Activated CD4-positive, alpha-beta T cell treated with anti-CD3 and anti-CD28 coated beads, Interleukin-2, amount 10 ng/mL, durations not matched to agents 24 days and 14 days (primary cell): ENCODE measurements at regions of chr21 and their contacts with region 1.

Region 1: GRCh38 chr21:32392880-32393676 is at the start of gene URB1:
- DNase-seq: peak; percentile 99
- H3K4me3 Mint-ChIP-seq: peak within 1 kb of the TSS; percentile 93
- H3K27ac Mint-ChIP-seq: peak within 1 kb of the TSS; percentile 89
- H3K4me1 Mint-ChIP-seq: peaks cover 30% of the 10 kb centered on the region
- H3K27me3 Mint-ChIP-seq: peaks cover 8% of the 10 kb centered on the region
- total RNA-seq, gene URB1: 39.2 and 41.7 TPM in 2 replicates

Region 2: GRCh38 chr21:32278518-32279376 is 114.3 kb before region 1 on chr21 and contains the start of gene MIS18A:
- intact Hi-C with region 1: loop called (anchors 2 kb)
- DNase-seq: peak; percentile 99
- H3K4me3 Mint-ChIP-seq: peak within 1 kb of the TSS; percentile 100
- H3K27ac Mint-ChIP-seq: peak within 1 kb of the TSS; percentile 98
- H3K4me1 Mint-ChIP-seq: peaks cover 32% of the 10 kb centered on the region
- H3K27me3 Mint-ChIP-seq: peaks cover 3% of the 10 kb centered on the region
- total RNA-seq, gene MIS18A: 27.8 and 31.3 TPM in 2 replicates

Region 3: DNA sequence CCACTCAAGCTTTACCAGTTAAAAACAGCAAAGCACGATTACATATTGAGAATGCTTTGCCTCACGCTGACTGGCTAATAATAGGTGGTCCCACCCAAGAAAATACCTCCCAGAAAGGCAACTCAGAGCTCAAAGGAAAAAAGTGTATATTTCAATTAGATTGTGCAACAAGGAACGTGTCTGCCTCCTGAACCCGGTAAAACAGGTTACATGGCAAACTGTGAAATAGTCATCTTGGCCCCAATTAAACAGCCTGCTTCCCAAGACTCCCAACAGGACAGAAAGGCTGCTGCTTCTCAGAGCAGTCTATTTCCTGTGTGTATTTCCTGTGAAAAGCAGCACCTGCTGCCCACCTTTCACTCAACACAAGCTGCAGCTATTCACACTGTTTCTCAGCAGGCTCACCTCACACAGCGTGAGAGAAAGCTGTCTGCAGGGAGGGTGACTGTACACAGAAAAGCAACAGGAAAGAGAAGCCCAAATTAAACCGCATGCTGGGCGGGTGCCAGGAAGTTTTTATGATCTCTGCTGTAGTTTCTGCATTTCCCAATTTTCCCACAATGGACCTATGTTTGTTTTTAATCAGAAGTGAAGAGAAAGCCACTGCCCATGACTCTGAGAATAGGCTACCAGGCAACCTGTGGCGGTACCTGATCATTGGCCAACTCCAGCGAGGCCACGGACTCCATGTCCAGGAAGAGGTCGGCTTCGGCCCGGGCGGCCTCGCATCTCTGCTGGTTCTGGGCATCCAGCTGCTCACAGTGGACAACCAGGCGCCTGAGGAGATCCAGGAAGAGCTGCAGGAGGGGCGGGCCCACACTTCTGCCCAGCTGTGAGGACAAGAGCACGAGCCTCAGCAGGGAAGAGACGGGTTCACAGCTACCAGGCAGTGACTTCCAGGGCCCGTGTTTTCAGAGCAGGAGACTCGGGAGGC is 44.2 kb before region 1 on chr21:
- intact Hi-C with region 1: no loop called
- DNase-seq: no peak
- H3K4me3 Mint-ChIP-seq: no peak overlapping the region
- H3K27ac Mint-ChIP-seq: no peak overlapping the region
- H3K4me1 Mint-ChIP-seq: no peaks in the 10 kb centered on the region
- H3K27me3 Mint-ChIP-seq: no peaks in the 10 kb centered on the region

Region 4: DNA sequence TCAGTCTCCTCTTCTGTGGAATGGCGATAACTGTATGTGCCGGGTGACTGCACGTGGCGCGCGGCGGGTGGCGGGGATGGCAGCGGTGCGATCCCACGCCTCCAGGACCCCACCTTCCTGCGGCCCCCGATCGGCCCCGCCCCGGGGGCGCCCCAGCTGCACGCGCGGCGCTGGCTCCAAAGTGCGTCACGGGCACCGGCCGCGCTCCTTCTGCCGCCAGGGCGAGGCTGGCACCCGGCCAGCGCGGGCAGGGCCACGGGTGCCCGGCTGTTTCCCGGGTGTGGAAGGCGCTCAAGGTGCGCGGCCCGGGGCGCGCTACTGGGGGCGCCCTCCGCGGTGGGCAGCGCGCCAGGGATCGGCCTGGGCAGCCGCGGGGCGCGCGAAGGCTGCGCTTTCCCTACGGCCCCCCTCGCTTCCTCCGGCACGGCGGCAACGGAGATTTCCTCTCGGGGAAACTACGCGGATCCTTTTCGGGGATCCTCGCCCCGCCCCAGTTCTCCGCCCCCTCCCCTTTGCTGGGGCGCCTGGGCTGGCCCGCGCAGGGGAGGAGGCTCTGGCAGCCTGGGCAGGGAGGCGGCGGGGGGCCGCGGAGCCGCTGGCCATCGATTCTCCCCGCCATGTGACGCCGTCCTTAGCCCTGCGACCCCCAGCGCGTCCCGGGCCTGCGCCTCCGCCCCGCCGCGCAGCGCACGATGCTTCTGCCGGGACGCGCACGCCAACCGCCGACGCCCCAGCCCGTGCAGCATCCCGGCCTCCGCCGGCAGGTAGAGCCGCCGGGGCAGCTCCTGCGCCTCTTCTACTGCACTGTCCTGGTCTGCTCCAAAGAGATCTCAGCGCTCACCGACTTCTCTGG is 19.3 kb after region 1 on chr21 and contains the start of gene EVA1C:
- intact Hi-C with region 1: loop called (anchors 1 kb)
- DNase-seq: peak; percentile 87
- H3K4me3 Mint-ChIP-seq: peak within 1 kb of the TSS; percentile 95
- H3K27ac Mint-ChIP-seq: peak within 1 kb of the TSS; percentile 94
- H3K4me1 Mint-ChIP-seq: peaks cover 16% of the 10 kb centered on the region
- H3K27me3 Mint-ChIP-seq: peaks cover 2% of the 10 kb centered on the region
- total RNA-seq, gene EVA1C: 6.0 and 8.2 TPM in 2 replicates

Region 5: DNA sequence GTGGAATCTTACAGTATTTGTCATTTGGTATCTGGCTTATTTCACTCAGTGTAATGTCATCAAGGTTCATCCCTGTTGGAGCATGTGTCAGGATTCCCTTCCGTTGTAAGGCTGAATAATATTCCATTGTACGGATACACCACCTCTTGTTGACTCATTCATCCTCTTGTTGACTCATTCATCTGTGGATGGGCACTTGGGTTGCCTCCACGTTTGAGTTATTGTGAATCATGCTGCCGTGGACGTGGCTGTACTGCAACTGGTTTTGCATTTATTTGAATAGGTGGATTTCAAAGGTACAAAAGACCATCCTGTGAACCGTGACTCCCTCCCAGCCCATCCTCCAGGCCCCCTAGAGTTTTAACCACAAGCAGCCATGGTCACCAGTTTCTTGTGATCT is 204.1 kb after region 1 on chr21:
- intact Hi-C with region 1: loop called (anchors 2 kb)
- DNase-seq: no peak
- H3K4me3 Mint-ChIP-seq: no peak overlapping the region
- H3K27ac Mint-ChIP-seq: peak overlapping the region; percentile 10
- H3K4me1 Mint-ChIP-seq: peaks cover 6% of the 10 kb centered on the region
- H3K27me3 Mint-ChIP-seq: no peaks in the 10 kb centered on the region

Region 6: GRCh38 chr21:32741336-32741972 is 348.4 kb after region 1 on chr21:
- intact Hi-C with region 1: no loop called
- DNase-seq: no peak
- H3K4me3 Mint-ChIP-seq: no peak overlapping the region
- H3K27ac Mint-ChIP-seq: no peak overlapping the region
- H3K4me1 Mint-ChIP-seq: peaks cover 6% of the 10 kb centered on the region
- H3K27me3 Mint-ChIP-seq: no peaks in the 10 kb centered on the region